ENCODE measurements at regions of chr17 and their contacts with region 1.

Region 1: GRCh38 chr17:781805-782731 is at the starts of genes GLOD4 and MRM3:
- DNase-seq: peak; percentile 66
- H3K4me3 ChIP-seq: peak within 1 kb of the TSS; percentile 99
- CTCF ChIP-seq: no peak

Region 2: GRCh38 chr17:740240-741017 is 41.6 kb before region 1 on chr17:
- in situ Hi-C with region 1: no loop called
- DNase-seq: no peak
- H3K4me3 ChIP-seq: no peak overlapping the region
- CTCF ChIP-seq: no peak

Region 3: DNA sequence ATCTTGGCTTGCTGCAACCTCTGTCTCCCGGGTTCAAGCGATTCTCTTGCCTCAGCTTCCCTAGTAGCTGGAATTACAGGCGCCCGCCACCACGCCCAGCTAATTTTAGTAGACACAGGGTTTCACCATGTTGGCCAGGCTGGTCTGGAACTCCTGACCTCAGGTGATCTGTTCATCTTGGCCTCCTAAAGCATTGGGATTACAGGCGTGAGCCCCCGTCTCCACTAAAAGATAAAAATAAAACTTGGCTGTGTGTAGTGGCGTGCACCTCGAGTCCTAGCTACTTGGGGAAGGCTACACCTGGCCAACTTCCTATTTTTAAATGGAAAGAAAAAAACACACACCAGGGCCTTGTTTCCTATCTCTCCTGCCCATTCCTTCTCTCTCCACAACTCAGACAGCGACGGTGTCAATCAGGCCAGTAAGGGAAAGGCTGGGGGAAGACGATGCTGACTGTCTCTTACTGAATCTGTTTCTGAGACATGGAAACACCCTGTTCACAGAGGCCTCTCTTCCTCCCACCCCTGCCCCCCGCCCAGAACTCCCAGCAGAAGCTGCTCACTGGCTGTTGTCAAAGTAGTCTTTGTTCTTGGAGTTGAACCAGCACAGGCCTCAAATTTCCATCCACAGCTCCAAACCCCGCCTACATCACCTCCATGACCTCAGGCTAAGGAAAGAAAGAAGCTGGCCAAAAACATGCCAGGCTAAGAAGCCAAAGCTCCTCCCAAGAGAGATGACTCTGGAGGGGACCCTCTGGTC is 100.9 kb after region 1 on chr17:
- in situ Hi-C with region 1: no loop called
- DNase-seq: no peak
- H3K4me3 ChIP-seq: no peak overlapping the region
- CTCF ChIP-seq: no peak

Region 4: GRCh38 chr17:996554-997344 is 214.7 kb after region 1 on chr17 and contains the start of gene TIMM22:
- in situ Hi-C with region 1: loop called (anchors 25 kb)
- DNase-seq: peak; percentile 95
- H3K4me3 ChIP-seq: peak within 1 kb of the TSS; percentile 99
- CTCF ChIP-seq: peak; percentile 84